GM12878 (cell line): ENCODE measurements at regions of chr1 and their contacts with region 1.

Region 1: GRCh38 chr1:229526695-229527094 is 18.6 kb upstream of the NUP133 start:
- DNase-seq: no peak
- ATAC-seq: no peak
- H3K4me3 ChIP-seq: no peak overlapping the region
- H3K27ac ChIP-seq: no peak overlapping the region
- H3K4me1 ChIP-seq: no peaks in the 10 kb centered on the region
- H3K27me3 ChIP-seq: no peaks in the 10 kb centered on the region
- CTCF ChIP-seq: no peak
- EP300 ChIP-seq: no peak
- POLR2A ChIP-seq: no peak
- RAD21 ChIP-seq: no peak

Region 2: DNA sequence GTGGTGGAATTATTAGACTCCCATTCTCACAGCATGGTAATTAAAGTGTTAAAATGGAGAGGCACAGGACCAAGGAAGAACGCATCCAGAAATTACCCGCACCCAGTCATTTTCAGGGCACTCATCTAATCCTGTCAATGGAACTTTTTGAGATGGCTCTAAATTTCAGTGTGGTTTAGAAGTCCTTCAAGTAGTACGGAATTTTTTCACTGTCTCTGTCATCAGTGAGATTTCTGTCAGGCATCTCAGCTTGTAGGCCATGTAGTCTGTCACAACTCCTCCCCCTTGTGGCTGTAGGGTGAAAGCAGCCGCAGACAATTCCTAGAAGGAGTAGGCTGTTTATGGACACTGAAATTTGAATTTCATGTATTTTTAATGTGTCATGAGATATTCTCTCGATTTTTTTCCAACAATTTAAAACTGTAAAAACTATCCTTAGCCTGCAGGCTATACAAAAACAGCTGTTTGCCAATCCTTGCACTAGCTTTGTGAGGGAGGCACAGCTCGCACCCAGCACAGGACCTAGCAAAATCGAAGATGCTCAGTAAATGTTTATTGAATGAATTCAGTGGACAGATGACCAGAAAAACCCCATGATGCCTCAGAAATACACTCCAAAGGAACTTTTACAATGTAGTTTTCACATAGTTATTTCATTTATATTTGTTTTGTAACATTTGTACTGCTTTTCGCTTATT is 12.0 kb before region 1 on chr1:
- CTCF ChIA-PET with region 1: interaction called, 14 read pairs
- POLR2A ChIA-PET with region 1: no interaction called
- RAD21 ChIA-PET with region 1: no interaction called
- SMC1A ChIA-PET with region 1: no interaction called
- in situ Hi-C with region 1: no loop called
- intact Hi-C with region 1: no loop called
- DNase-seq: no peak
- ATAC-seq: peak; percentile 91
- H3K4me3 ChIP-seq: no peak overlapping the region
- H3K27ac ChIP-seq: no peak overlapping the region
- H3K4me1 ChIP-seq: no peaks in the 10 kb centered on the region; the same call in 1 of the 2 replicates
- H3K27me3 ChIP-seq: no peaks in the 10 kb centered on the region
- CTCF ChIP-seq: peak; percentile 75 to 83 (median 82)
- EP300 ChIP-seq: no peak
- POLR2A ChIP-seq: no peak
- RAD21 ChIP-seq: peak; percentile 58